T-cell (primary cell): ENCODE measurements at regions of chr3 and their contacts with region 1.

Region 1: GRCh38 chr3:18357747-18358146 is 67.4 kb downstream of the SATB1 start:
- DNase-seq: no peak
- ATAC-seq: no peak
- H3K4me3 ChIP-seq: no peak overlapping the region
- H3K4me3 Mint-ChIP-seq: no peak overlapping the region
- H3K27ac ChIP-seq: no peak overlapping the region
- H3K27ac Mint-ChIP-seq: peak overlapping the region in 1 of 2 donors; percentile 76
- H3K4me1 ChIP-seq: peaks cover 0 to 6% of the 10 kb centered on the region in 2 experiments
- H3K4me1 Mint-ChIP-seq: peaks cover 41 to 68% (median 59%) of the 10 kb centered on the region in 3 donors
- H3K27me3 ChIP-seq: no peaks in the 10 kb centered on the region
- H3K27me3 Mint-ChIP-seq: no peaks in the 10 kb centered on the region

Region 2: DNA sequence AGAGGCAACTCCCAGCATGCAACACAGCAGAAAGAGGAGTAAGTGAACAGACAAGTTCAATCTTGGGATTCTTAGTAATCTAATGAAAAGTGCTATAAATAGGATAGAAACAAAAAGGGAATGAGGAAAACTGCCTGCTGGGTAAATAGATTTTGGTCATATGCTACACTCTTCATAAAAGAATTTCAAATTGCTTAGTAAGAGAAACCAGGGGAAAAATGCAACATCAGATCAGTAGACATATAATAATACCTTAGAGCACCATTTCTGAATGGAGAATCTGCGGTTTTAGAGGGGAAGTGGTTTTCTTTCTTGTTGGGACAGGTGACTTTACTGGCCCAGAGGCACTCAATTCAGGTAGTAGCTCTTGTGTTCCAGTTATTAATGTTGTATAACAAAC is 601.9 kb before region 1 on chr3:
- CTCF ChIA-PET with region 1: no interaction called
- POLR2A ChIA-PET with region 1: interaction called in 1 of 2 experiments, 13 read pairs
- DNase-seq: peak in 1 of 35 experiments; percentile 29
- ATAC-seq: peak in 1 of 4 experiments; percentile 56
- H3K4me3 ChIP-seq: no peak overlapping the region
- H3K4me3 Mint-ChIP-seq: no peak overlapping the region
- H3K27ac ChIP-seq: no peak overlapping the region
- H3K27ac Mint-ChIP-seq: no peak overlapping the region
- H3K4me1 ChIP-seq: no peaks in the 10 kb centered on the region
- H3K4me1 Mint-ChIP-seq: peaks cover 6 to 11% (median 8%) of the 10 kb centered on the region in 3 donors
- H3K27me3 ChIP-seq: no peaks in the 10 kb centered on the region
- H3K27me3 Mint-ChIP-seq: no peaks in the 10 kb centered on the region

Region 3: DNA sequence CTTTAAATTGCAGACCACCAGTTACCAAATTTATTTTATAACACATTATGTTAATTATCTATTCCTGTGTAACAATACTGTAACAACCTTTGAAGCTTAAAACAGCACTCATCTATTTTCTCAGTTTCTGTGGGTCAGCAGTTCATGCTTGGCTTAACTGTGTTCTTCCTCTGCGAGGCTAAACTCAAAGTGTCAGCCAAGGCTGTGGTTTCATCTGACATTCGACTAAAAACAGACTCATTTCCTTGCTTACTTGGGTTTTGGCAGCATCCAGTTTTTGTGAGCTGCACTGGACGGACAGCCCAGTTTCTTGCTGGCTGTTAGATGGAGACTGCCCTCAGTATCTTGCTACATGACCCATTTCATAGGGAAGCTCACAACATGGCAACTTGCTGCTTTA is 543.2 kb after region 1 on chr3:
- CTCF ChIA-PET with region 1: no interaction called
- POLR2A ChIA-PET with region 1: no interaction called
- DNase-seq: no peak
- ATAC-seq: no peak
- H3K4me3 ChIP-seq: no peak overlapping the region
- H3K4me3 Mint-ChIP-seq: no peak overlapping the region
- H3K27ac ChIP-seq: no peak overlapping the region
- H3K27ac Mint-ChIP-seq: no peak overlapping the region
- H3K4me1 ChIP-seq: peaks cover 0 to 5% of the 10 kb centered on the region in 2 experiments
- H3K4me1 Mint-ChIP-seq: no peaks in the 10 kb centered on the region
- H3K27me3 ChIP-seq: no peaks in the 10 kb centered on the region
- H3K27me3 Mint-ChIP-seq: peaks cover 5% of the 10 kb centered on the region in 2 donors